ENCODE measurements at regions of chr15 and their contacts with region 1.

Region 1: DNA sequence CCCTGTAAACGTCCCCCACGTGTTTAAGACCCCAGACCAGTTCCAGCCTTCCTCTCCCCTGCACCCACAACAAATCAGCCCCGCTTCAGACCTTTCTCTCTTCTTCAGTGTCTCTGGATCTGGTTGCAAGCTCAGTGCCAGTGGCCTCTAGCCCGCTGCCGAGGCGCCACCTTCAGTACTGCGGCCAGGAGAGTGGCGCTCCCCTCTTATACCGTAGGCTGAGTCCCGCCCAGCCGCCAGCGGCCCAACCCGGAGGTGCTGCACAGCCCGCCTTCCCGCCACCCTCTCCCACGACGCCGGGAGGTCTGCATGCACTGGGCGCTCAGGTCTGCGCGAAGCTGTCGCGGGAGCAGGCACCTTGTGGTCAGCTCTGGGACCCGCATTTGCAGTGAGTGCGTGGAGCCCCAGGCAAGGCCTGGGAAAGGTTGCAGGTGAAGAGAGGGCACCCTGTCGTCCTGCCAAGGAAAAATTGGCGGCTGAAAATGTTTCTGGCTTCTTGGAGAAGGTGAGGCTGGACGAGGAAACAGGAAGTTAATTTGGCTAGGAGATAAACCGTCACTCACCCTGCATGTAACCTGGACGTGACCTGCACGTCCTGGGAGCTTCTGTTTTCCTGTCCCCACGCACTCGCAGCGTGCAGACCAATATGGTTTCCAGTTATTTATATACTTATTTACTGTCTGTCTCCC is at the start of gene C2CD4B:
- DNase-seq: peak; percentile 78 to 82
- ATAC-seq: peak; percentile 89 to 98 (median 96)
- H3K4me3 ChIP-seq: peak within 1 kb of the TSS; percentile 26 to 64 (median 58)
- H3K27ac ChIP-seq: peak within 1 kb of the TSS; percentile 49 to 87 (median 81)
- H3K4me1 ChIP-seq: peaks cover 0 to 29% (median 19%) of the 10 kb centered on the region in 9 donors
- H3K27me3 ChIP-seq: peaks cover 0 to 81% (median 41%) of the 10 kb centered on the region in 7 donors
- CTCF ChIP-seq: no peak
- total RNA-seq, gene C2CD4B: 0.82 to 7.1 (median 2.7) TPM

Region 2: GRCh38 chr15:61994216-61994615 is 171.0 kb before region 1 on chr15:
- intact Hi-C with region 1: no loop called
- DNase-seq: no peak
- ATAC-seq: no peak
- H3K4me3 ChIP-seq: no peak overlapping the region
- H3K27ac ChIP-seq: no peak overlapping the region
- H3K4me1 ChIP-seq: no peaks in the 10 kb centered on the region
- H3K27me3 ChIP-seq: no peaks in the 10 kb centered on the region
- CTCF ChIP-seq: no peak

Region 3: GRCh38 chr15:62066663-62067447 is 98.4 kb before region 1 on chr15 and contains the start of gene C2CD4A:
- intact Hi-C with region 1: loop called in 1 of 10 experiments (anchors 5 kb)
- DNase-seq: peak; percentile 54 to 56
- ATAC-seq: peak; percentile 58 to 90 (median 76)
- H3K4me3 ChIP-seq: peak within 1 kb of the TSS in 9 of 10 donors; percentile 45 to 71 (median 57)
- H3K27ac ChIP-seq: peak within 1 kb of the TSS in 3 of 10 donors; percentile 6 to 56 (median 38)
- H3K4me1 ChIP-seq: peaks cover 2 to 35% (median 19%) of the 10 kb centered on the region in 9 donors
- H3K27me3 ChIP-seq: peaks cover 0 to 30% (median 0%) of the 10 kb centered on the region in 7 donors
- CTCF ChIP-seq: peak in 3 of 9 donors; percentile 19 to 33 (median 26)
- total RNA-seq, gene C2CD4A: 0.25 TPM in 1 of 10 donors, not detected in the others

Region 4: GRCh38 chr15:62125773-62126172 is 39.5 kb before region 1 on chr15:
- intact Hi-C with region 1: loop called in 1 of 10 experiments (anchors 5 kb)
- DNase-seq: peak in 1 of 2 donors; percentile 38
- ATAC-seq: peak in 7 of 8 donors; percentile 46 to 91 (median 77)
- H3K4me3 ChIP-seq: no peak overlapping the region
- H3K27ac ChIP-seq: no peak overlapping the region
- H3K4me1 ChIP-seq: peaks cover 0 to 33% (median 7%) of the 10 kb centered on the region in 9 donors
- H3K27me3 ChIP-seq: no peaks in the 10 kb centered on the region
- CTCF ChIP-seq: peak; percentile 11 to 67 (median 44)

Region 5: GRCh38 chr15:62209322-62209721 is 44.1 kb after region 1 on chr15:
- intact Hi-C with region 1: no loop called
- DNase-seq: no peak
- ATAC-seq: no peak
- H3K4me3 ChIP-seq: no peak overlapping the region
- H3K27ac ChIP-seq: no peak overlapping the region
- H3K4me1 ChIP-seq: no peaks in the 10 kb centered on the region
- H3K27me3 ChIP-seq: peaks cover 0 to 3% (median 0%) of the 10 kb centered on the region in 7 donors
- CTCF ChIP-seq: no peak

Region 6: GRCh38 chr15:62219799-62220198 is 54.6 kb after region 1 on chr15:
- intact Hi-C with region 1: no loop called
- DNase-seq: no peak
- ATAC-seq: no peak
- H3K4me3 ChIP-seq: no peak overlapping the region
- H3K27ac ChIP-seq: no peak overlapping the region
- H3K4me1 ChIP-seq: no peaks in the 10 kb centered on the region
- H3K27me3 ChIP-seq: peaks cover 0 to 5% (median 0%) of the 10 kb centered on the region in 7 donors
- CTCF ChIP-seq: no peak

Region 7: GRCh38 chr15:62306851-62307504 is 141.7 kb after region 1 on chr15:
- intact Hi-C with region 1: no loop called
- DNase-seq: peak; percentile 27 to 58
- ATAC-seq: peak; percentile 84 to 93 (median 88)
- H3K4me3 ChIP-seq: no peak overlapping the region
- H3K27ac ChIP-seq: peak overlapping the region in 1 of 10 donors; percentile 19
- H3K4me1 ChIP-seq: peaks cover 0 to 19% (median 6%) of the 10 kb centered on the region in 9 donors
- H3K27me3 ChIP-seq: peaks cover 0 to 7% (median 0%) of the 10 kb centered on the region in 7 donors
- CTCF ChIP-seq: peak; percentile 57 to 81 (median 67)